Esophagus muscularis mucosa (tissue), 4 donors: ENCODE measurements at regions of chr12 and their contacts with region 1.

Region 1: GRCh38 chr12:117367011-117367638 is 5.7 kb upstream of the NOS1 start:
- DNase-seq: no peak
- H3K4me3 ChIP-seq: no peak overlapping the region
- H3K27ac ChIP-seq: no peak overlapping the region
- H3K4me1 ChIP-seq: no peaks in the 10 kb centered on the region
- H3K27me3 ChIP-seq: peaks cover 0 to 94% (median 5%) of the 10 kb centered on the region in 4 donors
- CTCF ChIP-seq: peak; percentile 79 to 93 (median 86)
- EP300 ChIP-seq: no peak
- POLR2A ChIP-seq: no peak

Region 2: DNA sequence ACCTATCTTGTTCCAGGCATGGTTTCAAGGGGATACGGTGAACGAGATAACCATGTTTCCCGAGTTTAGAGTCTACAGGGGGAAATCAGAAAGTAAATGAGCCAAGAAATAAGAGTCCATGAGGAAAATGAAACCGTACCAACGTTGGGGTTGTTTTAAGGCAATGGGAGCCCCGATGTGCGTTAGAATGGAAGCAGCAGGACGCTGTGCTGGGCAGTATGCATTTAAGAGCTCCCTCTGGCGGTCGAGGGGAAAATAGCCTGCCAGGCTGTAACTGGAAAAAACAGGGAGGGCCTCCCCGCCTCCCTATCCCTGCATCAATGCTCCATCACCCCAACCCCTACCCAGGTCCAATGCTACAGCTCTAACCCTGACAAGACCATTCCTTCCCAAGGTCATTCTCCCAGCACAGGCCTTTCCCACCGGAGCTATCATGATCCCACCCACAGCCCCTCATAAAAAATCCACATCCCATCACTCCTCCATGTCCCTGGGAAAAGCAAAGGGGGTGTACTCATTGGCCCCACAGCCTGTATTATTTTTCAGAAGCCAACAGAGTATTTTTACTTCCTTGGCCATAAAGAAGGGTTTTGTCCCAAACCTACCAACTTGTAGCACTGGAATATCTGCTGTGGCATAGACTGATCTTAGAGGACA is 220.6 kb after region 1 on chr12:
- intact Hi-C with region 1: loop called (anchors 2 kb)
- DNase-seq: no peak
- H3K4me3 ChIP-seq: no peak overlapping the region
- H3K27ac ChIP-seq: no peak overlapping the region
- H3K4me1 ChIP-seq: peaks cover 0 to 8% (median 7%) of the 10 kb centered on the region in 4 donors
- H3K27me3 ChIP-seq: peaks cover 0 to 28% (median 0%) of the 10 kb centered on the region in 4 donors
- CTCF ChIP-seq: peak; percentile 59 to 86 (median 81)
- EP300 ChIP-seq: no peak
- POLR2A ChIP-seq: no peak